IMR-90 (cell line): ENCODE measurements at regions of chr4 and their contacts with region 1.

Region 1: DNA sequence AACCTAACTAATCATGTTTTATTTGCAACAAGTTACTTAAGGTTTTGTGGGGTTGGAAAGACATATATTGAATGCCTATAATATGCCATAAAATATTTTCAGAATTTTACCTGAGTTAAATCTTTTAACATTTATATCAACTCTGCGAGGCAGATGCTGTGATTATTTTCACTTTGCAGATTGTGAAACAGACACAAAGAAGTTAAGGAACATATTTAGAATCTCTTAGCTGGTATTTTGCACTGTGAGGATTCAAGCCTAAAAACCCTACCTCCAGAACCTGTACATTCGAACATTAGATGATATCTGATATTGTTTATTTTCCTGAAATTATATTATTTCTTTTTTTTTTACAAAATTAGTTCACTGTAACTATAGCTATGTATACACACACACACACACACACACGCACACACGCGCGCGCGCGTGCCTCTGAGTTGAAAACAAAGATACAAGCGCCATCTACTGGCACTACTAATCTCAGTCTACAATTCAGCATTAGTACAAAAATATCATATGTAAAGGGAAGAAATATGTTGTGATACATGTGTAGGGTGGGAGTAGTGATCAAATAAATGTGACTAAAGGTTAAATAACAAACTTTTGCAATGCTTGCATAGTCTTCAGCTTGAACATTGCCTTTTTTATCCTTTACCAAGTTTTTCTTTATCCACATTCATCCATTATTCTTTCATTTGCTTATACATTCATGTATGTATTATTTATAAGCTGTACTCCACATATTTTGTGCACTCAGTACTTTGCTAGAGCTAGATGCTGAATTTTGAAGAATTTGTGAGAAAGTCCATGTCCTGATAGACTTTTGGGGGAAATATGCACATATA is 61.5 kb downstream of the ANXA10 start:
- DNase-seq: peak; percentile 83
- ATAC-seq: peak; percentile 91
- H3K4me3 ChIP-seq: peak overlapping the region; percentile 24; the same call in 1 of the 2 replicates
- H3K27ac ChIP-seq: no peak overlapping the region
- H3K4me1 ChIP-seq: no peaks in the 10 kb centered on the region
- H3K27me3 ChIP-seq: no peaks in the 10 kb centered on the region
- CTCF ChIP-seq: peak; percentile 87
- POLR2A ChIP-seq: no peak
- RAD21 ChIP-seq: peak; percentile 83

Region 2: DNA sequence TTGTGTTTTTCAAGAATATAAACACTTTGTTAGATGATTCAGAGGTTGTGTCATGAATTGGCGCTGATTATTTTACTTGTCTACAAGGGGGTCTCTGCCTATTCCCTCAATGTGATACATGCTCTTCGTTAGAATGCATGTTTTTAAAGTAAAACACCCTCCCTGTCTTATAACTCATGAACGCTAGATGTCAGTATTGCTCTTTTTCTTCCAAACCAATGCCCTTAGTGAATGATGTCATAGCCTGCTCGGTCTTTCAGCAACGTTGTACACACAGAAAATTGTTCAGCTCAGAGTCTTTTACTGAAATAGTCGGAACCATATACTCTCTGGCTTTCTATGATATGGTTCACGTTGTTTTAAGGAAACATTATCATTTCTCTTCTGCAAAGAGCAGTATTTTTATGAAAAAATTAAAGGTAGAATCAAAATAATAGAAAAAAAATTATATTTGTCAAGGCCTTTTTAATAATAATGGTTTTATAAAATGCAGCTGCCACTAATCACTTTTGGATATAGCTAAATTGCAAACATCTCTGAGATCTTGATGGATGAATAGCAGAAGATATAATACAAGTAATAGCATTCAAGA is 1987.9 kb before region 1 on chr4:
- CTCF ChIA-PET with region 1: interaction called, 3 read pairs
- POLR2A ChIA-PET with region 1: no interaction called
- dilution Hi-C with region 1: no loop called
- in situ Hi-C with region 1: no loop called
- intact Hi-C with region 1: loop called (anchors 5 kb)
- DNase-seq: peak; percentile 68
- ATAC-seq: peak; percentile 86
- H3K4me3 ChIP-seq: no peak overlapping the region
- H3K27ac ChIP-seq: no peak overlapping the region
- H3K4me1 ChIP-seq: no peaks in the 10 kb centered on the region
- H3K27me3 ChIP-seq: no peaks in the 10 kb centered on the region
- CTCF ChIP-seq: peak; percentile 72
- POLR2A ChIP-seq: no peak
- RAD21 ChIP-seq: peak; percentile 77

Region 3: GRCh38 chr4:167622481-167623246 is 531.2 kb before region 1 on chr4:
- CTCF ChIA-PET with region 1: no interaction called
- POLR2A ChIA-PET with region 1: no interaction called
- dilution Hi-C with region 1: no loop called
- in situ Hi-C with region 1: no loop called
- intact Hi-C with region 1: loop called (anchors 10 kb)
- DNase-seq: peak; percentile 19
- ATAC-seq: peak; percentile 79
- H3K4me3 ChIP-seq: no peak overlapping the region
- H3K27ac ChIP-seq: no peak overlapping the region
- H3K4me1 ChIP-seq: no peaks in the 10 kb centered on the region
- H3K27me3 ChIP-seq: no peaks in the 10 kb centered on the region
- CTCF ChIP-seq: peak; percentile 57
- POLR2A ChIP-seq: no peak
- RAD21 ChIP-seq: peak; percentile 46

Region 4: DNA sequence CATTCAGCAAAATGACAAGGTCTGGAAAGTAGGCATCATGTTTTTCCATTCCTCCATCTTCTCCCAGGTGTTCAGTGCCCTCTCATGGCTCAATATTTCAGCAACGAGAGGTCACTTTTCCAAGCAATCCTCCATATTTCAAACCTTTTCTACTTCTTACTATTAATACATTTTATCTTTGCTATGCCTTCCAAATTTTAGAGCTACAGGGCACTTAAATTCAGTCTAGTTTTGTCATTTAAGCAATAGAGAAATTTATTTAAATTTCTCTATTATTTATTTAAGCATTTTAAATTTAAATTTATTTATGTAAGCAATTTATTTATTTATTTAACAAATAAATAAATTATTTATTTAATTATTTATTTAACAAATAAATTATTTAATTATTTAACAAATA is 366.6 kb before region 1 on chr4:
- CTCF ChIA-PET with region 1: interaction called, 10 read pairs
- POLR2A ChIA-PET with region 1: no interaction called
- dilution Hi-C with region 1: no loop called
- in situ Hi-C with region 1: no loop called
- intact Hi-C with region 1: no loop called
- DNase-seq: no peak
- ATAC-seq: no peak
- H3K4me3 ChIP-seq: no peak overlapping the region
- H3K27ac ChIP-seq: no peak overlapping the region
- H3K4me1 ChIP-seq: no peaks in the 10 kb centered on the region
- H3K27me3 ChIP-seq: no peaks in the 10 kb centered on the region
- CTCF ChIP-seq: no peak
- POLR2A ChIP-seq: no peak
- RAD21 ChIP-seq: no peak

Region 5: DNA sequence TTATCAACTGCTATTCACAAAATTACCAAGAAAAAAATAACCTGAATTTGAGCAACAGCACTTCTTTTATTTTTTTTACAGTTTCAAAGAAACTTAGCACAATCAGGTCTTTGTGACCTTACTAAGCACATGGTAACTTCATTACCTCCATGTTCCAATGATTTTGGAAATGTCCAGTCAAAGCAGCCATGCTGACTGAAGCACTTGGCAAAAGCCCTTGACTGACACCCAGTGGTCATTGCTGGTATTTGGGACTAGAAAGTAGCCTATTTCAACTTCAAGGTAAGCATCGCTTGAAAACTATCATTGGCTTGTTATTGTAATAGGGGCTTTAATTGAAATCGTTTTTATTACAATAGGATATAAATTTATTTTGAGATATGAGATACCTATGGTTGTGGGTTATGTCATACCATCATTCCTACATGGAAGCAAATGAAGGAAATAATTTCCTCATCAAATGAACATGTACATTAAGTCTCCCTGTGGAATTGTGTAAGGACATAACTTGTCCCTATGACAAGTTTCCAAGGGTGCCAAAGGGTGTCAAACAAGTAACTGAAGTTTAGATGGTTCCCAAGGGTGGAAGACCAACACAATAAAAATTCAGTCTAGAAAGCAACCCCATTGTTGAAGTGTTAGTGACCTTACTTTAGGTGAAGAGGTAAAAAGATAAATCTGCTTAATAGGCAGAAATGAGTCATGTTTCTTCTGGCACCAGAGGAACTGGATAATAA is 76.7 kb before region 1 on chr4:
- CTCF ChIA-PET with region 1: no interaction called
- POLR2A ChIA-PET with region 1: no interaction called
- dilution Hi-C with region 1: no loop called
- in situ Hi-C with region 1: no loop called
- intact Hi-C with region 1: loop called (anchors 1 kb)
- DNase-seq: peak; percentile 71
- ATAC-seq: peak; percentile 81
- H3K4me3 ChIP-seq: no peak overlapping the region
- H3K27ac ChIP-seq: no peak overlapping the region
- H3K4me1 ChIP-seq: no peaks in the 10 kb centered on the region
- H3K27me3 ChIP-seq: no peaks in the 10 kb centered on the region
- CTCF ChIP-seq: peak; percentile 93
- POLR2A ChIP-seq: no peak
- RAD21 ChIP-seq: peak; percentile 93

Region 6: GRCh38 chr4:168124008-168124641 is 29.7 kb before region 1 on chr4:
- CTCF ChIA-PET with region 1: no interaction called
- POLR2A ChIA-PET with region 1: no interaction called
- dilution Hi-C with region 1: no loop called
- in situ Hi-C with region 1: no loop called
- intact Hi-C with region 1: no loop called
- DNase-seq: peak; percentile 88
- ATAC-seq: peak; percentile 90
- H3K4me3 ChIP-seq: no peak overlapping the region
- H3K27ac ChIP-seq: 0 out of 2 replicates have a peak overlapping the region, but pooled peaks have one; percentile 14
- H3K4me1 ChIP-seq: peaks cover 2% of the 10 kb centered on the region; the same call in 1 of the 2 replicates
- H3K27me3 ChIP-seq: no peaks in the 10 kb centered on the region
- CTCF ChIP-seq: no peak
- POLR2A ChIP-seq: peak; percentile 35; the same call in 1 of the 2 replicates
- RAD21 ChIP-seq: no peak